Naive thymus-derived CD4-positive, alpha-beta T cell (primary cell): ENCODE measurements at regions of chr1 and their contacts with region 1.

Region 1: DNA sequence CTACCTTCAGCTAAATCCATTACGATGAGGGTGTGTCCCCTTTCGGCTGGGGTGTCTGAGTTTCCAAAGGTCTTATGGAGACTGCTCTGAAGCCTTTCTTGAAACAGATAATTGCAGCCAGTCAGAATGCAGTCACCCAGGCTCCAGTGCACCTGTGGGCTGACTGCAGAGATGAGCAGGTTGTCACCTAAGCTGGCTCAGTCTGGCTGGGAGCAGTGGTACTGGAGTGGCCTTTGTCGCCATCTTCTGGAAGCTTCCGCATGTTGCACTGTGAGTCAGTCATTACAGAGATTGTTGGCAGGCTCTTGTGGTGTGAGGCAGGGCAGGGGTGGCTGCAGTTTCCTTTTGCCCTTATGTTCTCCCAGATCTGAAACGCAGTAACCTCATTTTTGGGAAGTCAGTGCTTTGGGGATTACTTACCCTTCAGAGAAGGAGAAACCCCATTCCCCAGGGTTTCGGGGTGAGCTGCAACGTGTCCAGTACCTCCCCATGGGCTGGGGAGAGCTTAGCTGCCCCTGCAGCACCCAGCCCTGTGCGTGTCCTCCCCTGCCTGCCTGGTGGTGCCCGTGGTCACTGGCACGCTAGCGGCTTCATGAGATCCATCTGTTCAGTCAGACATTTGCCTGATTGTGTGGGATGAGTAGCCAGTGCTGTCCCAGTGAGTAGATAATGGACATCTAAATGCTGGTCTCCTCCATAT is 48.0 kb downstream of the SMYD2 start:
- DNase-seq: peak; percentile 53 to 82 (median 75)
- ATAC-seq: peak; percentile 93
- H3K4me3 ChIP-seq: no peak overlapping the region
- H3K4me3 Mint-ChIP-seq: no peak overlapping the region
- H3K27ac ChIP-seq: no peak overlapping the region
- H3K27ac Mint-ChIP-seq: peak overlapping the region in 5 of 9 donors; percentile 14 to 80 (median 41)
- H3K4me1 ChIP-seq: no peaks in the 10 kb centered on the region
- H3K4me1 Mint-ChIP-seq: peaks cover 0 to 11% (median 0%) of the 10 kb centered on the region in 7 donors
- H3K27me3 ChIP-seq: no peaks in the 10 kb centered on the region
- H3K27me3 Mint-ChIP-seq: no peaks in the 10 kb centered on the region

Region 2: DNA sequence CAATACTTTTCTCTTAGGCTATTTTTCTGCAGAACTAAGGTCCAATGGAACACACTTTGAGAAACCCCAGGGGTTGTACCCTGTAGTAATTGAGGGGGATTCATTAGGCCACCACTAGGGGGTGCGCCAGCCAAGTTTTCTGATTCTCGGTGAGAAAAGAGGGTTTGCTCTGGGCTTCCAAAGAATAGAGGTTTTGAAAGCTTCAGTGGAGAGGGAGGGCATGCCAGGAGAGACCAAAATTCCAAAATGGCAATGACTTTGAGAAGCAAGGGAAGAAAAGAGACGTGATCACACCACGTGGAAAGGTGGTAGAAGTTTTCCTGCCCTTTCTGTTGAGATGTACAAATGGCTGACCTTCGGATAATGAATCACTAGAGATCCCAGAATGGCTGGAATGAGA is 954.6 kb before region 1 on chr1:
- CTCF ChIA-PET with region 1: interaction called, 4 read pairs
- POLR2A ChIA-PET with region 1: no interaction called
- intact Hi-C with region 1: loop called in 1 of 2 experiments (anchors 1 kb)
- DNase-seq: peak; percentile 12 to 60 (median 42)
- ATAC-seq: peak; percentile 61
- H3K4me3 ChIP-seq: no peak overlapping the region
- H3K4me3 Mint-ChIP-seq: no peak overlapping the region
- H3K27ac ChIP-seq: no peak overlapping the region
- H3K27ac Mint-ChIP-seq: no peak overlapping the region
- H3K4me1 ChIP-seq: no peaks in the 10 kb centered on the region
- H3K4me1 Mint-ChIP-seq: no peaks in the 10 kb centered on the region
- H3K27me3 ChIP-seq: no peaks in the 10 kb centered on the region
- H3K27me3 Mint-ChIP-seq: peaks cover 0 to 7% (median 0%) of the 10 kb centered on the region in 5 donors

Region 3: GRCh38 chr1:214213136-214213535 is 115.8 kb before region 1 on chr1:
- CTCF ChIA-PET with region 1: interaction called, 39 read pairs
- POLR2A ChIA-PET with region 1: interaction called, 3 read pairs
- intact Hi-C with region 1: loop called (anchors 1 kb)
- DNase-seq: no peak
- ATAC-seq: no peak
- H3K4me3 ChIP-seq: no peak overlapping the region
- H3K4me3 Mint-ChIP-seq: no peak overlapping the region
- H3K27ac ChIP-seq: no peak overlapping the region
- H3K27ac Mint-ChIP-seq: no peak overlapping the region
- H3K4me1 ChIP-seq: no peaks in the 10 kb centered on the region
- H3K4me1 Mint-ChIP-seq: peaks cover 0 to 10% (median 5%) of the 10 kb centered on the region in 7 donors
- H3K27me3 ChIP-seq: no peaks in the 10 kb centered on the region
- H3K27me3 Mint-ChIP-seq: peaks cover 7 to 38% (median 13%) of the 10 kb centered on the region in 5 donors

Region 4: GRCh38 chr1:214281021-214281719 is 47.8 kb before region 1 on chr1 and contains the start of gene SMYD2:
- CTCF ChIA-PET with region 1: interaction called, 7 read pairs
- POLR2A ChIA-PET with region 1: interaction called, 9 read pairs
- intact Hi-C with region 1: loop called (anchors 5 kb)
- DNase-seq: peak; percentile 49 to 77 (median 72)
- ATAC-seq: peak; percentile 86
- H3K4me3 ChIP-seq: peak within 1 kb of the TSS; percentile 88
- H3K4me3 Mint-ChIP-seq: peak within 1 kb of the TSS; percentile 79 to 98 (median 90)
- H3K27ac ChIP-seq: peak within 1 kb of the TSS; percentile 82
- H3K27ac Mint-ChIP-seq: peak within 1 kb of the TSS; percentile 81 to 95 (median 91)
- H3K4me1 ChIP-seq: peaks cover 17 to 34% of the 10 kb centered on the region in 2 donors
- H3K4me1 Mint-ChIP-seq: peaks cover 30 to 64% (median 45%) of the 10 kb centered on the region in 7 donors
- H3K27me3 ChIP-seq: no peaks in the 10 kb centered on the region
- H3K27me3 Mint-ChIP-seq: no peaks in the 10 kb centered on the region
- total RNA-seq, gene SMYD2: 24.3 to 39.5 (median 34.4) TPM

Region 5: DNA sequence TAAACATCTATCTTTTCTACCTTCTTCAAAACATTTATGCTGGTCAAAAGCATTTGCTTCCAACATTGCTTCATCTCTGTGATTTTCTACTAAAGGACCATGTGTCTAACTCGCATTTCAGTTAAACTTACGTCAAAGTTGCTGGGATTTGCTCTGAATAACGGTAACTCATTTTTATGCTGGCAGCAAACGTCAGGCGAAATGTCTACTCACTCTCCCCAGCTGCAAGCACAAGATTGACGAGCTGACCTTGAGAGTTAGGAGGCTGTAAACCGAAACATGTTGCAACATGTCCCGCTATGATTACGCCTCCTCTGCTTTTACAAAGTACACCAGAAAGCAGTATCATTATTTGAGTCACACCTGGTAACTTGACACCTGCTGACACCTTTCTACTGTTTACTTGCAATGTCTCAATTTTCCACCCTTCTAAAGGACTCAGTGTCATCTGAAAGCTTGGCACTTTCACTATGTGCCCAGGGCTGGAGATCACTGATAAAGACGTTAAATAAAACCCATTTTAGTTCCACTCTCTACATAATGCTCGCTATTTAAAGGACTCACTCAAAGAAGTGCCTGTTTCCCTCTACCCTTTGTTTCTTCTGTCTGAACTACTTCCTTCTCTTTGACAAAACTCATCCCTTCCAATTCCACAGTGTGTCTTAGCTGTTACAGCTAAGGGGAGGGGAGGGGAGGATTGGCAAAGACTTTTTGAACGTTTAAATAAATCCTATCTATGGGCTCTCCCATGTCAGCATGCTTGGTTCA is 110.6 kb after region 1 on chr1:
- CTCF ChIA-PET with region 1: no interaction called
- POLR2A ChIA-PET with region 1: no interaction called
- intact Hi-C with region 1: loop called in 1 of 2 experiments (anchors 2 kb)
- DNase-seq: peak in 4 of 9 donors; percentile 5 to 47 (median 12)
- ATAC-seq: peak; percentile 58
- H3K4me3 ChIP-seq: peak overlapping the region; percentile 3
- H3K4me3 Mint-ChIP-seq: peak overlapping the region; percentile 27 to 85 (median 66)
- H3K27ac ChIP-seq: no peak overlapping the region
- H3K27ac Mint-ChIP-seq: peak overlapping the region in 8 of 9 donors; percentile 1 to 96 (median 30)
- H3K4me1 ChIP-seq: no peaks in the 10 kb centered on the region
- H3K4me1 Mint-ChIP-seq: peaks cover 15 to 59% (median 30%) of the 10 kb centered on the region in 7 donors
- H3K27me3 ChIP-seq: no peaks in the 10 kb centered on the region
- H3K27me3 Mint-ChIP-seq: peaks cover 0 to 16% (median 6%) of the 10 kb centered on the region in 5 donors

Region 6: GRCh38 chr1:214632091-214632490 is 303.2 kb after region 1 on chr1:
- CTCF ChIA-PET with region 1: interaction called, 11 read pairs
- POLR2A ChIA-PET with region 1: no interaction called
- intact Hi-C with region 1: loop called (anchors 1 kb)
- DNase-seq: peak in 7 of 9 donors; percentile 48 to 79 (median 71)
- ATAC-seq: peak; percentile 78
- H3K4me3 ChIP-seq: no peak overlapping the region
- H3K4me3 Mint-ChIP-seq: peak overlapping the region in 9 of 10 donors; percentile 13 to 80 (median 62)
- H3K27ac ChIP-seq: no peak overlapping the region
- H3K27ac Mint-ChIP-seq: peak overlapping the region; percentile 56 to 96 (median 87)
- H3K4me1 ChIP-seq: peaks cover 6 to 15% of the 10 kb centered on the region in 2 donors
- H3K4me1 Mint-ChIP-seq: peaks cover 8 to 47% (median 27%) of the 10 kb centered on the region in 7 donors
- H3K27me3 ChIP-seq: no peaks in the 10 kb centered on the region
- H3K27me3 Mint-ChIP-seq: no peaks in the 10 kb centered on the region

Region 7: DNA sequence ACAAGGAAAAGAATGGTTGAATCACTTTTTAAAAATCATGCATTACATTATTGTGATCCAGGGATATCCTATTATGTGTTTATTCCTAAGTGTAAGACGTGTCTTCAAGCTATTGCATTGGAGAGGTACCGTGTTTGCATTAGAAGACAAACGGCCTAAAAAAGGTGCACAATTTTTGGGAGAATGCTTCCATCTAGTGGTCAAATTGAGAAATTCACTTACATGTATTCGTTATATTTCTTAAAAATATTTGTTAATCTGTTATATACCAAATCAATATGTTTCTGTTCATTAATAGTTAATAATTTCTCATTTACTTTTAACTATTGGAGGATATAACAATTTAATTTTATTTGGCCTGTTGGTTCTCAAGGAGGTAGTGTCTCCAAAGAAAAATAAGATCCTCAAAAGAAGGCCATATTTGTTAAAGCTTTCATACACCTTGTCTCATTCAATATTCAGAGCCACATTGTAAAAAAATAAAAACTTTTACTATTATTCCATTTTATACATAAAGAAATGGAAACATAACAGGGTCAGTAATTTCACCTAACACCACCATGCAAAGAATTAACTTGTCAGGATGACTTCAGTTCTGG is 1197.7 kb after region 1 on chr1:
- CTCF ChIA-PET with region 1: interaction called, 6 read pairs
- POLR2A ChIA-PET with region 1: no interaction called
- intact Hi-C with region 1: loop called (anchors 1 to 2 kb)
- DNase-seq: peak in 7 of 9 donors; percentile 16 to 56 (median 47)
- ATAC-seq: peak; percentile 52
- H3K4me3 ChIP-seq: no peak overlapping the region
- H3K4me3 Mint-ChIP-seq: no peak overlapping the region
- H3K27ac ChIP-seq: no peak overlapping the region
- H3K27ac Mint-ChIP-seq: no peak overlapping the region
- H3K4me1 ChIP-seq: no peaks in the 10 kb centered on the region
- H3K4me1 Mint-ChIP-seq: peaks cover 0 to 3% (median 0%) of the 10 kb centered on the region in 7 donors
- H3K27me3 ChIP-seq: no peaks in the 10 kb centered on the region
- H3K27me3 Mint-ChIP-seq: peaks cover 6 to 20% (median 12%) of the 10 kb centered on the region in 5 donors